Activated CD4-positive, alpha-beta memory T cell treated with anti-CD3 and anti-CD28 coated beads for 36 hours (primary cell): ENCODE measurements at regions of chr2 and their contacts with region 1.

Region 1: DNA sequence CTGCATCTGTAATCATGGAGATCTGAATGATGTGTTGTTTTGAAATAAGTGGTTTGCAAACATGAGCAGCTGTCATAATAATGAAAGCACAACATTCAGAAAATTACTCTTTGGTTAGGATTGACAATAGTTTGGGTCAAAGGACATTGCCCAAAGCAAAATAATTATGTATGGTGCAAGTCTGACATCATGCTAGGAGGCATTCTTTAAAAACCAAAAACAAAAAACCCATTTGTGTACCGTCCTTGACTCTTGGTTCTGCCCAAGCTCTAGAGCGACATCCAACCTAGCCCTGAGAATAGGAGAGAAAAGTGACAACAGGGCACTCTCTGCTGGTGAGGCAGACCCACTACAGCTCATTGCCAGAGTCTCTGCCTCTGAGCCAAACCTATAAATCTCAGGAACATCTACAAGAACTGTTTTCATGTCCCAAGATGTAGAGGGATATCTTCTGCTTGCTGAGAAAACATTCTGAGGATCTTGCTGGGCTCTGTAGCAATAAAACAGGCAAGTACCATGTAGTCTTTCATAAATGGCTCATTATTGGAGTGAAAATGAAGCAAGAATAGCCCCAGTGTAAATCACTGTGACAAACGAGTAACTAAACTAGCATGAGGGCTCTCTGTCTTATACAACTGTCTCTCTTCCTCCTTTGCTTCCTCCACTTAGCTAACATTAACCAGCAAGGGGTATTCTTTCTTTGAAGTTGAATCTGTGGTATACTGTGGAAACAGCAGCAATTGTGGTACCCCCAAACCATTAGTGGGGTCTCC is 266.8 kb upstream of the CXCR4 start:
- DNase-seq: peak; percentile 60
- H3K4me3 Mint-ChIP-seq: no peak overlapping the region
- H3K27ac Mint-ChIP-seq: peak overlapping the region; percentile 96
- H3K4me1 Mint-ChIP-seq: peaks cover 45% of the 10 kb centered on the region
- H3K27me3 Mint-ChIP-seq: no peaks in the 10 kb centered on the region

Region 2: GRCh38 chr2:135741395-135742324 is 643.1 kb before region 1 on chr2 and contains the start of gene UBXN4:
- CTCF ChIA-PET with region 1: no interaction called
- POLR2A ChIA-PET with region 1: no interaction called
- intact Hi-C with region 1: loop called (anchors 1 kb)
- DNase-seq: peak; percentile 98
- H3K4me3 Mint-ChIP-seq: peak within 1 kb of the TSS; percentile 96
- H3K27ac Mint-ChIP-seq: peak within 1 kb of the TSS; percentile 99
- H3K4me1 Mint-ChIP-seq: peaks cover 24% of the 10 kb centered on the region
- H3K27me3 Mint-ChIP-seq: no peaks in the 10 kb centered on the region
- total RNA-seq, gene UBXN4: 107 TPM

Region 3: GRCh38 chr2:135876066-135876711 is 508.5 kb before region 1 on chr2 and contains the start of gene MCM6:
- CTCF ChIA-PET with region 1: interaction called, 7 read pairs
- POLR2A ChIA-PET with region 1: interaction called, 20 read pairs
- intact Hi-C with region 1: loop called (anchors 1 kb)
- DNase-seq: peak; percentile 100
- H3K4me3 Mint-ChIP-seq: peak within 1 kb of the TSS; percentile 90
- H3K27ac Mint-ChIP-seq: peak within 1 kb of the TSS; percentile 98
- H3K4me1 Mint-ChIP-seq: peaks cover 39% of the 10 kb centered on the region
- H3K27me3 Mint-ChIP-seq: peaks cover 2% of the 10 kb centered on the region
- total RNA-seq, gene MCM6: 280 to 284 TPM

Region 4: DNA sequence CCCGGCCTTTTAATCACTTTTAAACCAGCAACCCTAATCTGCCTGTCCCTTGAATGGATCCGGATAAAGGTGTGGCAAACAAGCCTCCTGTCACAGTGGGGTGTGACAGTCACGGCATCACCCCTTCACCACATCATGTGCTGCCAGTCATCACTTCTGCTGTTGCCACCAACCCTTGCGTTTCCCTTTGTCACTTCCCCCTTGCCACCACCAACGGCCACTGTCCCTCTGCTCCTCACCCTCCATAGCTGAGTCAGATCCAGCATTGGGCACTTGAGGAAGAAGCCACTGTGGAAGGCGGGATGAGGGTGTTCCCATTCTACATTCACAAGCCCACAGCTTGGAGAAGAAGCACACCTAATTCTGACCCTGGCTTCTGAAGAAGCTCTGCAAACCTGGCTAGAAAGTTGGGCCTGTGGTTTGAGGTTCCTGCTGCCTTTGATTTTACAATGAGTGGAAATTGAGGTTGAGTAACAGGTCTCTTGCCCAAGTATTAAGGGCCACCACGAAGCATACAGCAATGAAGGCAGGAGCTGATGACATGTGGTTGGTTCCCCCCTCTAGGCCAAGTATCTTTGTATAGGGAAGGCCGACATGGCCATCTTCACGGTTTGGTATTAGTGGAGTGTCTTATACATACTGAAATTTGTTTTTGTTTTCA is 376.4 kb before region 1 on chr2:
- CTCF ChIA-PET with region 1: interaction called, 3 read pairs
- POLR2A ChIA-PET with region 1: interaction called, 6 read pairs
- intact Hi-C with region 1: loop called (anchors 1 kb)
- DNase-seq: peak; percentile 87
- H3K4me3 Mint-ChIP-seq: no peak overlapping the region
- H3K27ac Mint-ChIP-seq: peak overlapping the region; percentile 72
- H3K4me1 Mint-ChIP-seq: peaks cover 49% of the 10 kb centered on the region
- H3K27me3 Mint-ChIP-seq: no peaks in the 10 kb centered on the region

Region 5: DNA sequence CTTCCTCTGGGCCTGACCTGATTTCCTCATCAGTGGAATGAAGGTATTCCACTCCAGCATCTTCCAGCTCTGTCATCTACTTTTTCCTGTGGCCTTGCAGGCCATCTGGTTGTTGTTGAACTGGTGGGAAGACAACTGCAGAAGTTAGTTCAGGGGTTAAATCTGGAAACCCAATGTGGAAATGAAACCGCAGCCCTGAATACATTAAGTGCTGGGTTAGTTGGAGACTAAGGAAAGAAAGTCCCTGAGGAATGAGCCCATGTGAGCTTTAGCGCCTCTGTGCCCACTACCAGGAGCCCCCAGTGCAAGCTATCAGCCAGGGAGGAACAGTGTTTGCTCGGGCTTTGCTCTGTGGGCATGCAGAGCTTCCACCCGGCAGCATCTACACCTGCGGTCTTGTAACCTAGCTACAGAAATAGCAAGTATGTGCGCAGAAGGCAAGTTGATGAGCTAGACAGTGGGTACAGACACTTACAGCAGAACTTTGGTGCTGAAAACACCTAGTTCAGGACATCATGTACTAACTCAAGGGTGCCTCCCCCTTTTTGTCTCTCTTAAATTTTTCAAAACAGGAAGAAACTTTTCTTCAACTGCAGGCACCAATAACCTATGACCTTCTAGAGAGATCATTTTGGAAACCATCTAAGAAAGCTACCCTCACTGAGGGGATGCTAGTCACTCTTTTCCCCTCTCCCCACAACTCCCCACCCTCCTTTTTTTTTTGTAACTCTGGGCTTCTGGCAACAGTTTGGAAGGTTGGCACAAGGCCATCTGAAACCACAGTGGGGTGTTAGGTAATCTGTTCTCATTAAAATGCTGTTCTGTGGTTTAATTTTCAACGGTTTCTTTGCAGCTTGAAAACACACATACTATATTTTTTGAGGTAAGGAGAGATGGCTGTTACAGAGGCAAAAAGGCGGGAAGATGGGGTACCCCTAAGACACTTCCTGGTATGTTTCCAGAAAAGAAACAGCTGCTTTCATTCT is 248.5 kb before region 1 on chr2:
- CTCF ChIA-PET with region 1: interaction called, 10 read pairs
- POLR2A ChIA-PET with region 1: interaction called, 11 read pairs
- intact Hi-C with region 1: loop called (anchors 1 kb)
- DNase-seq: peak; percentile 75
- H3K4me3 Mint-ChIP-seq: peak overlapping the region; percentile 11
- H3K27ac Mint-ChIP-seq: peak overlapping the region; percentile 70
- H3K4me1 Mint-ChIP-seq: peaks cover 89% of the 10 kb centered on the region
- H3K27me3 Mint-ChIP-seq: peaks cover 14% of the 10 kb centered on the region

Region 6: GRCh38 chr2:136305517-136306192 is 79.1 kb before region 1 on chr2:
- CTCF ChIA-PET with region 1: interaction called, 4 read pairs
- POLR2A ChIA-PET with region 1: interaction called, 23 read pairs
- intact Hi-C with region 1: no loop called
- DNase-seq: peak; percentile 84
- H3K4me3 Mint-ChIP-seq: peak overlapping the region; percentile 33
- H3K27ac Mint-ChIP-seq: peak overlapping the region; percentile 72
- H3K4me1 Mint-ChIP-seq: peaks cover 34% of the 10 kb centered on the region
- H3K27me3 Mint-ChIP-seq: peaks cover 3% of the 10 kb centered on the region

Region 7: DNA sequence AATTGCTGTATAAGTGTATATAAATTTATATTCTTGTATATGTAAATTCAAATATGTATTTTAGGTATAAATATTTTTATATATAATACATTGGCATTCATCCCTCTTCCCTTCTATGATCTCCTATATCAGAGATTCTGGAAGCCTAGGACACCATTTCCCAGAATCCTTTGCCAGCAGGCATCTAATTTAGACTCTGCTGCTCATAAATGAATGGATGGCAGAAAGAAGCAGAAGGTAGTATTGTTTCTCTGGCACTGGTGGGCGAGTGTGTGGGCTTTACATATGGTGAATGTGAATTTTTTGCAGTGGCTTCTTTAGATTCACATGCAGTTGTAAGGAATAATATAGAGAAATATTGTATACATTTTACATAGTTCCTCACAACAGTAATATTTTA is 165.5 kb after region 1 on chr2:
- CTCF ChIA-PET with region 1: no interaction called
- POLR2A ChIA-PET with region 1: no interaction called
- intact Hi-C with region 1: no loop called
- DNase-seq: no peak
- H3K4me3 Mint-ChIP-seq: no peak overlapping the region
- H3K27ac Mint-ChIP-seq: no peak overlapping the region
- H3K4me1 Mint-ChIP-seq: no peaks in the 10 kb centered on the region
- H3K27me3 Mint-ChIP-seq: peaks cover 4% of the 10 kb centered on the region